Activated B cell treated with CpG ODN at 0.5 μM for 24 hours (primary cell): ENCODE measurements at regions of chr11 and their contacts with region 1.

Region 1: DNA sequence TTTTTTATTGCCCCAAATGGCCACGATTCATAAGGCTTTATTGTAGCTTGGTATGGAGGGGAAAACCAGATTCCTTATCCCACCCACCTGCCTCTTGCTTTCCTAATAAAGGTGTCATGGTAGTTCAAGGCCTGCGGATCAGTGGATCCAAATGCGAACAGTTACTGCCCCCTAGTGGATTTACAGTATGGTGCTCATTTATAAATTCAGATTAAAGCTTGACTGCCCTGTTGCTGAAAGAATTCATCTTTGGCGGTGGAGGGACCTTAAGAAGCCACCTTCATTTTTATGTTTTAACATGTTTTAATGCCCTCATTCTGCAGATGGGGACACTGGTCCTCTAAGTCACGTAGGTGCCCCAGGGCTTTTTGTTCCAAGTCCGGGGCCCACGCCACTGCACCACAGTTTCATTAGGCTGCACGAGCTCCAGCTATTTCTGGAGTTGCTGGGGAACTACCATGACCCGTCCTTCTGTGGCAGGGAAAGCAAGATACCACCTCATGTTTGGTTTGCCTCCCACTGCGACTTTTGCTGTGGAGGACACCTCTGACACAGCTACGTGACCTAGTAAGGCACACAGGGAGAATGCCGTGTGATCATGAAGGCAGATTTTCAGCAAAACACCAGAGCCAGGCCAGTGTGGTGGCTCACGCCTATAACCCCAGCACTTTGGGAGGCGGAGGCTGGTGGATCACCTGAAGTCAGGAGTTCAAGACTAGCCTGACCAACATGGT is 15.6 kb upstream of the INCENP start:
- DNase-seq: no peak
- ATAC-seq: peak; percentile 50
- H3K4me3 Mint-ChIP-seq: no peak overlapping the region
- H3K27ac Mint-ChIP-seq: no peak overlapping the region
- H3K4me1 Mint-ChIP-seq: peaks cover 7% of the 10 kb centered on the region
- H3K27me3 Mint-ChIP-seq: peaks cover 4% of the 10 kb centered on the region
- CTCF ChIP-seq: peak; percentile 33

Region 2: DNA sequence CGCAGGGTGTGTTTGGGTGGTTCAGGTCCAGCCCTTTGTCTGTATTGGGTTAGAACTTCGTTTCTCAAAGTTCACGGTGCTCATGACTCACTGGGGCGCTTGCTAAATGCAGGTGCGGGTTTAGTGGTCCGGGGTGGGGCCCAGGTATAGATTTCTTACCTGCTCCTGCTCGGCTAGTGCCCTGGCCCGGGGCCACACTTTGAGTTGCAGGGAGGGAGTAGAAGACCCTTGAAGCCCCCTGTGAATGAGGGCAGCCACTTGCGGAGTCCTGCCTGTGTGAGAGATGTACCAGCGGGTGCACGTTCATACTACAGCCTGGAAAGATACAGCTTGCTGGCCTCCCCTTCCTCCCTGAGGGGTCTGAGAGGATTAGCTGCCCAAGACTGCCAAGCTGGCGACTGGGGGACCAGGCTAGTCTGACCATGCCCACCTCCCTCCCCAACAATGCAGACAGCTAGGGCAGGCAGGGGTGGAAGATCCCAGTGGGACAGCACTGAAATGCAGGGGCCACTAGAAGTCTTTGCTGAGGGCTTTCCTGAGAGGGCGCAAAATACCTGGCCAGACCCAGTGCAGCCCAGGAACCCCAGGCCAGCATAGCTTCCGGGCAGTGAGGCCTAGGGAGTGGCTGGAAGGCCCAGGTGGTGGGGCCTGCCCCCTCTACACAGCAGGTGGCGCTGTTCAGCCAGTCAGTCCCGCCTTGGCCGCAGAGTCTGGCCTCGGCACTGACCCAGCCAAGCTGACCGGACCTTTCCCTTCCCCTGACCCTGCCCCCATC is 360.8 kb before region 1 on chr11:
- CTCF ChIA-PET with region 1: interaction called, 20 read pairs
- POLR2A ChIA-PET with region 1: no interaction called
- intact Hi-C with region 1: loop called (anchors 1 kb)
- DNase-seq: peak; percentile 42
- ATAC-seq: peak; percentile 51
- H3K4me3 Mint-ChIP-seq: no peak overlapping the region
- H3K27ac Mint-ChIP-seq: no peak overlapping the region
- H3K4me1 Mint-ChIP-seq: peaks cover 4% of the 10 kb centered on the region
- H3K27me3 Mint-ChIP-seq: peaks cover 22% of the 10 kb centered on the region
- CTCF ChIP-seq: peak; percentile 39

Region 3: DNA sequence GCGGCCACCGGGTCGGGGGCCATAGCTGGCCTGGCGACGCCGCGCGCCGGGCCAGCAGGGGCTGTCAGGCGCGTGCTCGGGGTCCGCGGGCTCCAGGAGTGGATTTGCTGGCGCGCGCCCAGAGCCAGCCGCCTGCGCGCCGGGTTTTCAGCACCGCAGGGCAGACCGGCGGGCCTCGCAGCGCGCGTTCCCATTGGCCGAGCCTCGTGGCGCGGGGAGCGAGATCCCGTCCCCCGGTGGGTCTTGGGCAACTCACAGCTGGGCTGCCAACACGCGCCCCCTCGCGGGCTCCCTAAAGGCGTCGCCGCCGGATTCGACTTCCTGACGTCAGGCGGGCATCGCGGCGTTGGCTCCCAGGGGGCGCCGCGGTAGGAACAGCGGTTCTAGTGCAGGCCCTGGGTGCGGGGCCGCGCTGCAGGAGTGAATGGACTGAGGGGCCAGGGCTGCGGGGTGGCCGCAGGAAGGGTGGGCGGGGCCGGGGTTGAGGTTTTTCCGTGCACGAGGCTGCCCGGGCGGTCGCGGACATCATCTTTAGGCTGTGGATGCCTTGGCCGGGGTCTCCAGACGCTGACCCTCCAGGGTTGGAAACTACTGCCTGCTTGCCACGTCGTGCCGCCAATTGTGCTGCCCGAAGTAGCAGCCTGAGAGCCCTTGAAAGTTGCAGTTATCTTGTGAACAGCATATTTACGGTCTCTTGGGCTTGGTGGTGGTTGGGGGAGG is 291.3 kb before region 1 on chr11 and contains the start of gene FADS1:
- CTCF ChIA-PET with region 1: interaction called, 13 read pairs
- POLR2A ChIA-PET with region 1: interaction called, 3 read pairs
- intact Hi-C with region 1: no loop called
- DNase-seq: peak; percentile 75
- ATAC-seq: peak; percentile 63
- H3K4me3 Mint-ChIP-seq: peak within 1 kb of the TSS; percentile 92
- H3K27ac Mint-ChIP-seq: peak within 1 kb of the TSS; percentile 72
- H3K4me1 Mint-ChIP-seq: peaks cover 16% of the 10 kb centered on the region
- H3K27me3 Mint-ChIP-seq: peaks cover 4% of the 10 kb centered on the region
- CTCF ChIP-seq: no peak
- total RNA-seq, gene FADS1: 19.6 and 23.3 TPM in 2 replicates

Region 4: GRCh38 chr11:61871158-61871597 is 237.0 kb before region 1 on chr11:
- CTCF ChIA-PET with region 1: interaction called, 57 read pairs
- POLR2A ChIA-PET with region 1: no interaction called
- intact Hi-C with region 1: loop called (anchors 1 kb)
- DNase-seq: peak; percentile 76
- ATAC-seq: peak; percentile 95
- H3K4me3 Mint-ChIP-seq: peak overlapping the region; percentile 75
- H3K27ac Mint-ChIP-seq: peak overlapping the region; percentile 46
- H3K4me1 Mint-ChIP-seq: peaks cover 10% of the 10 kb centered on the region
- H3K27me3 Mint-ChIP-seq: no peaks in the 10 kb centered on the region
- CTCF ChIP-seq: peak; percentile 89

Region 5: GRCh38 chr11:61899146-61899841 is 208.9 kb before region 1 on chr11:
- CTCF ChIA-PET with region 1: interaction called, 89 read pairs
- POLR2A ChIA-PET with region 1: interaction called, 5 read pairs
- intact Hi-C with region 1: loop called (anchors 1 kb)
- DNase-seq: peak; percentile 97
- ATAC-seq: peak; percentile 99
- H3K4me3 Mint-ChIP-seq: no peak overlapping the region
- H3K27ac Mint-ChIP-seq: peak overlapping the region; percentile 50
- H3K4me1 Mint-ChIP-seq: peaks cover 22% of the 10 kb centered on the region
- H3K27me3 Mint-ChIP-seq: no peaks in the 10 kb centered on the region
- CTCF ChIP-seq: peak; percentile 90

Region 6: DNA sequence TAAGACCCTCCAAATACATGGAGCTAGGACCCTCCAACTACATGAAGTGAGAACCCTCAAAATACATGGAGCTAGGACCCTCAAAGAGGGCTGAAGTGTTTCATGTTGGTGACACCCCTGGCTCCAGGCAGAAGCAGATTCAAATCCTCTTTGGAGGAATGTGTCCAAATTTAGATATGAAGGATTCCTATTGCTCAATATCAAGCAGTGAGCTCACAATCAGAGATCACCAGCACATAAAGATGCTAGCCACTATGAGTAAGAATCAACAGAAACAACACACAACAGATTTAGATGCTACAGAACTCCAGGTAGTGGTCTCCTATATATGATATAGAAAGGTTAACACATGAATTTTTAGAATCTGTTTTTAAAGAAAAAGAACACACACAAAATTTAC is 179.6 kb before region 1 on chr11:
- CTCF ChIA-PET with region 1: no interaction called
- POLR2A ChIA-PET with region 1: no interaction called
- intact Hi-C with region 1: no loop called
- DNase-seq: no peak
- ATAC-seq: no peak
- H3K4me3 Mint-ChIP-seq: no peak overlapping the region
- H3K27ac Mint-ChIP-seq: no peak overlapping the region
- H3K4me1 Mint-ChIP-seq: no peaks in the 10 kb centered on the region
- H3K27me3 Mint-ChIP-seq: peaks cover 9% of the 10 kb centered on the region
- CTCF ChIP-seq: no peak

Region 7: DNA sequence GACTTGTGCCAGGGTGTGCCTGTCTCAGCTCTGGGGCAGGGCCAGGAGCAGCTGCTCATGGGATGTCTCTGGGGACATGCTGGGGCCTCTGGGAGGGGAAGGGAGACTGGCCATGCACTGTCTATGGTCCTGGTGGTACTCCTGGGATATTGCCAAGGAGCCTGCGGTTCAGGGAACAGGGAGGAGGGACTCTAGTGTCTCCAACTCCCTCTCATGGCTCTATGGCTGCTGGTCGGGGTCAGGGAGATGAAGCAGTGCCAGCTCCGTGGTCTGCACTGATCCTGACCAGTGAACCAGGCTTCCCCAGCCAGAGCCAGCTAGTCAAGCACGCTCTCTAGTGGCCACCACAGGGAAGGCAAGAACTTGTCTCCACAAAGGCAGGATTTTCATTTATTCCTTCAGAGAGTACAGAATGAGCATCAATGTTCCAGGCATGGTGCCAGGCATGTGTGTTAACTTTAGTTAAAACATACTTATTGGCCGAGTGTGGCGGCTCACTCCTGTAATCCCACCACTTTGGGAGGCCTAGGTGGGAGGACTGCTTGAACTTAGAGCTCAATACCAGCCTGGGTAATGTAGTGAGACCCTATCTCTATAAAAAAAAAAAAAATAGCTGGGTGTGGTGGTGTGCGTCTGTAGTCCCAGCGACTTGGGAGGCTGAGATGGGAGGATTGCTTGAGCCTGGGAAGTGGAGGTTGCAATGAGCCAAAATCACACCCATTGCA is 160.5 kb before region 1 on chr11:
- CTCF ChIA-PET with region 1: interaction called, 15 read pairs
- POLR2A ChIA-PET with region 1: no interaction called
- intact Hi-C with region 1: no loop called
- DNase-seq: peak; percentile 51
- ATAC-seq: peak; percentile 92
- H3K4me3 Mint-ChIP-seq: no peak overlapping the region
- H3K27ac Mint-ChIP-seq: no peak overlapping the region
- H3K4me1 Mint-ChIP-seq: peaks cover 11% of the 10 kb centered on the region
- H3K27me3 Mint-ChIP-seq: no peaks in the 10 kb centered on the region
- CTCF ChIP-seq: peak; percentile 35

Region 8: DNA sequence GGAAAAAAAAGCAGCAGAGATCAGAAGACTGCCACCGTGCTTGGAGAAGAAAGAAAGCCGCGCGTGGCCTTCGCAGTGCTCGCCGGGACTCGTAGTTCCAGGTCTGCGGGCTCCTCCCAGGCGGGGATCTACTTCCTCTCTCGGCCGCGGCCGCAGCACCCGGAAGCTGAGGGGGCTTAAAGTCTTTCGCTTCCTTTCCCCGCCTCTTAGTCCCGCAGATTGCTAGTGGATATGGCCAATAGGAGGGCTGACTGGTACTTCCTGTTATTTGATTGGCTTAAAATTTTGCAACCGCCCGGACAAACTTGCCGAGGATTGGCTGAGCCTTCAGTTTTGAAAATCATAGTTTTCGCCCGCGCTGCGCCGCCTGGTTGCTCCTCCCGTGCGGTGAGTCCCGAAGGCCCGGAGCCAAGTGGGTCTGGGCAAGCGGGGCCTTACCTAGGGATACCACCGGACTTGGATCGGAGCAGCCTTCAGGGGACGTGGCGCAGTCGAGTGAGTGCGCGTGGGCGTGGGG is 15.5 kb after region 1 on chr11 and contains the start of gene INCENP:
- CTCF ChIA-PET with region 1: interaction called, 11 read pairs
- POLR2A ChIA-PET with region 1: interaction called, 6 read pairs
- intact Hi-C with region 1: loop called (anchors 1 kb)
- DNase-seq: peak; percentile 80
- ATAC-seq: peak; percentile 99
- H3K4me3 Mint-ChIP-seq: peak within 1 kb of the TSS; percentile 93
- H3K27ac Mint-ChIP-seq: peak within 1 kb of the TSS; percentile 84
- H3K4me1 Mint-ChIP-seq: peaks cover 23% of the 10 kb centered on the region
- H3K27me3 Mint-ChIP-seq: no peaks in the 10 kb centered on the region
- CTCF ChIP-seq: no peak
- total RNA-seq, gene INCENP: 29.0 and 34.8 TPM in 2 replicates